ENCODE measurements at regions of chr3 and their contacts with region 1.

Region 1: DNA sequence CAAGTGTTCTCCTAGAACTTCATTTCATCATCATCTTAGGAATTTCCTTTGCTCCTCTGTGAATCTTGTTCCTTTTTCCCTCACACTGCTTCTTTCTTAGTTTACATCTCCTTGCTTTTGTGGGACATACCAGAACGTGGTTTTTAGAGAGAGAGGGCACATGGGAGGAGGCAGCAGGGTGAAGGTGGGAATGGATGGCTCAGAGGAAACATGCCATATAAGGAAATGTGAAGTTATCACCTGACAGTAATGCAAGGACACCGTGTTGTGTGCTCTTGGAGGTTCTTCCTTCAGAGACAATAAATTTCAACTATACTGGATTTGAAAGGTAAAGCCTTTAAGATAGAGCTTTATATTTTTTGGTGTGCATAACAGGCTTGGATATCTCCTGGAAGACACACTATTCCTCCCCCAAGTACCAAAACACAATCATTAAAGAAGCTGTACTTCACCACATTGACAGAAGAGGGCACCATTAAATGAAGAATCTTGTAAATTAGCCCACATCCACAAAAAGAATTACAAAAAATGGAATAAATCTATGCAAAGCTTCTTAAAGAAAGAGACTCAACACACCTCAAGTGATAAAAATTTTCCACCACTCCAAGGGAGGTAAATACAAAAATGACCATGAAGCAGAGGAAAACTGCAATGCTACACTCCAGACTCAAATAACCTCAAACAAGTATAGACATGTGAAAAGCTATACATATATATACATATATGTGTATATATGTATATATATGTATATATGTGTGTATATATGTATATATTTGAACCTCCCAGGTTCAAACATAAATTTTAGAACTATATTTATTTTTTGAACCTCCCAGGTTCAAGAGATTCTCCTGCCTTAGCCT is 26.1 kb downstream of the RPL39L start:
- DNase-seq: no peak
- ATAC-seq: peak; percentile 63
- H3K4me3 Mint-ChIP-seq: no peak overlapping the region
- H3K27ac Mint-ChIP-seq: peak overlapping the region; percentile 35
- H3K4me1 Mint-ChIP-seq: peaks cover 7% of the 10 kb centered on the region
- H3K27me3 Mint-ChIP-seq: no peaks in the 10 kb centered on the region

Region 2: DNA sequence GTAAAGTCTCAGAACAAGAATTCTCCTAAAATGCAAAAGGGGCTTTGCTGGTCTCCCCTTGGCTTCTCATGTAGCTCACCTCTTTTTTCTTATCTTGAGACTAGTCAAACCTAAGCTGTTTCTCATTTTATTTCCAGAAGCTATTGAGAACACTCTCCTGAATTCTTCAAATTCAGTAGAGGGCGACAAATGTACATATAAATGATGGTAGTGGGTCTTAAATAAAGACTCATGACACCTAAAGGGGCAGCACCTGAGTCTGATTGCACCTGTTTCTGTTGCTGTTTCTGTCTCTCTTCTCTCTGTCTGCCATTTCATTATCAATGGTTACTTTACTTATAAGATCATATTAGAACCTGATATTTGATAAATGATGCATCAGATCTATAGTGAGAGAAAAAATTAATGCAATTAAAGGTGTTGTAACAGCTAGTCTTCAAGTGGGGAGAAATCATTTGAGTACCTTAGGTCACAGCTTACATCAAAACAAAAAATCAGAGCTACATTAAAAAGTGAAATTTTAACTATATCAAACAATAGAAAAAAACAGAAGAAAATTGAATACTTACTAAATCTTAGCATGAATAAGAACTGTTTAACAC is 263.7 kb before region 1 on chr3:
- CTCF ChIA-PET with region 1: interaction called, 23 read pairs
- POLR2A ChIA-PET with region 1: no interaction called
- intact Hi-C with region 1: loop called in 1 of 2 experiments (anchors 1 kb)
- DNase-seq: peak; percentile 32
- ATAC-seq: peak; percentile 90
- H3K4me3 Mint-ChIP-seq: no peak overlapping the region
- H3K27ac Mint-ChIP-seq: peak overlapping the region; percentile 52
- H3K4me1 Mint-ChIP-seq: peaks cover 18% of the 10 kb centered on the region
- H3K27me3 Mint-ChIP-seq: peaks cover 7% of the 10 kb centered on the region

Region 3: DNA sequence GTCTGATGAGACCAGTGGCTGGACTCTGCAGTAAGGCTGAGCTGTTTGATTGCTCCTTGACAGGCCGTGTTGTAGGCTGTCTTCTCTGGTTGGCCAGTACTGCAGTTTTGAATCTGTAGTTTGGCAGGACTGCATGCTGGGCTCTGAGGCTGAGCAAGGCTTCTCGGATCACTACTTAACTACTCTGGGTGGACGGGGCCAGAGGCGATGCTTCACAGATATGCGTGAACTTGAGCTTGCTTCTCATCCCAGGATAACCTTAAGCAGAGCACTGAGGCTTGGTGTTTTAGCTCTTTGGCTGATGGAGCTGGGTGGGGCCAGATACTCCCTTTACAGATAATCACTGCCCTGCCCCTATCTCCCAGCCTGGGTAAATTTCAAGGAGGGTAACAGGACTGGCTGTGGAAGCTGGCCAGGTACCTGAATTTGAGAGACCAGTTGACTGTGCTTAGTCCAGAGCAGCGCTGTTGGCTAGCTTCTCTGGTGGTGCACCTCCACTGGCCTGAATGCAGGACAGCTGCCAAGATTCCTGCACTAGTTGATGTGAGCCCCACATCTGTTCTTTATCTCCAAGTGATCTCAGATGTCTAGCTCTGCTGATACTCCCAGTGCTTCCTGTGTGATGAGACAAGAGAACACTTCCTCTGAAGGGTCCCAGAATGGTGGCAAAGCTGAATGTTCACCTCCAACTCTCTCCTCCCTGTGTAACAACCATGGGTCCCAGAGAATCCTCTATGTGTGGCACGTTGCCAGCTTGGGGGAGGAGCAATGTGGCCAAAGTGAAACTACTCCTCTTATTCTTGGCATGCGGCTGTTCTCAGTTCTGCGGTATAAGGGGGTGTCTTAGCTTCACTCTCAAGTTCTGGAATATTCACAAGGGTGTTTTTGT is 11.7 kb before region 1 on chr3:
- CTCF ChIA-PET with region 1: interaction called, 40 read pairs
- POLR2A ChIA-PET with region 1: no interaction called
- intact Hi-C with region 1: no loop called
- DNase-seq: peak; percentile 67
- ATAC-seq: peak; percentile 70
- H3K4me3 Mint-ChIP-seq: peak overlapping the region; percentile 20
- H3K27ac Mint-ChIP-seq: peak overlapping the region; percentile 62
- H3K4me1 Mint-ChIP-seq: peaks cover 32% of the 10 kb centered on the region
- H3K27me3 Mint-ChIP-seq: no peaks in the 10 kb centered on the region

Region 4: GRCh38 chr3:187130346-187131066 is 17.3 kb after region 1 on chr3:
- CTCF ChIA-PET with region 1: interaction called, 29 read pairs
- POLR2A ChIA-PET with region 1: no interaction called
- intact Hi-C with region 1: no loop called
- DNase-seq: peak; percentile 63
- ATAC-seq: peak; percentile 92
- H3K4me3 Mint-ChIP-seq: peak overlapping the region; percentile 55
- H3K27ac Mint-ChIP-seq: peak overlapping the region; percentile 98
- H3K4me1 Mint-ChIP-seq: peaks cover 35% of the 10 kb centered on the region
- H3K27me3 Mint-ChIP-seq: no peaks in the 10 kb centered on the region

Region 5: GRCh38 chr3:187150599-187150998 is 37.4 kb after region 1 on chr3:
- CTCF ChIA-PET with region 1: interaction called, 78 read pairs
- POLR2A ChIA-PET with region 1: interaction called, 3 read pairs
- intact Hi-C with region 1: loop called (anchors 1 kb)
- DNase-seq: peak; percentile 82
- ATAC-seq: peak; percentile 86
- H3K4me3 Mint-ChIP-seq: no peak overlapping the region
- H3K27ac Mint-ChIP-seq: no peak overlapping the region
- H3K4me1 Mint-ChIP-seq: peaks cover 5% of the 10 kb centered on the region
- H3K27me3 Mint-ChIP-seq: peaks cover 2% of the 10 kb centered on the region

Measured in activated CD4-positive, alpha-beta T cell treated with anti-CD3 and anti-CD28 coated beads for 36 hours (primary cell).